Heart right ventricle (tissue), 16 donors: ENCODE measurements at regions of chr13 and their contacts with region 1.

Region 1: DNA sequence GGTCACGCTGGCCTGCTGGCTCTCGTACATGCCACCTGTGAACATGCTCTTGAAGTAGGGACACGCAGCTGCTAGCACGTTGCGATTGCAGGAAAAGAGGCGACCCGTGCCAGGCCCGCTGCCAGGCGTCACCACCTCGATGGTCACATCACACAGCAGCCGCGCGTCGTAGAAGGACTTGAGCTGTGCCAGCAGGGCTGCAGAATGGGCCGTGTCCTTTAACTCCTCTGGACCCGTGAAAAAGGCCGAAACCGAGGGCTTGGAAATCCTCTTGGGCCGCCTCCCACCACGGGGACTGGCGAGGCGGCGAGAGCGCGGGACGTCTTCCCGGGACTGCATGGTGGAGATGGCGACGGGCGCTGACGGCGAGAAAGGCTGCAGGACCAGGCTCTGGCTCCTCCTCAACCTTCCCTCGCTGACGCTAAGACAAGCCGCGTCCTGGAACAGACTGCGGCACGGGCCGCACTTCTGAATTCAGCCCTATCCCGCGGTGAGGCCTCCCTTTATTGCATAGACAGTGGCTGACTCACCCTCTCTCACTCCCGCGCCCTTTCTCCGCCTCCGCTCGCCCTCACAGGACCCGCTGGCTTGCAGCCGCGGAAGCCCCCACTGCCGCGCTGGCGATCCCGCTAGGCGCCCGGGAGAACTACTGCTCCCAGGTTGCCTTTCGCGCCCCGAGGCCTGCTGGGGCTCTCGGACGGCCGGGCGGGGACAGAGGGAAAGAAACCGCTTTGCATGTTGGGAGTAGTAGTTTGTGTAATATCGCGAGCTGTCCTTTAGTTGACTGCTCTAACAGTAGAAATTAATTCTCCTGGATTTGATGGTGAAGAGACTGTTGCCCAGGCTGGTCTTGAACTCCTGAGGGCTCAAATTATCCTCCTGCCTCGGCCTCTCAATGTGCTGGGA is at the start of gene KBTBD7:
- DNase-seq: peak; percentile 94
- ATAC-seq: peak; percentile 99 to 100 (median 99)
- H3K4me3 ChIP-seq: peak within 1 kb of the TSS; percentile 39 to 84 (median 68)
- H3K27ac ChIP-seq: peak within 1 kb of the TSS; percentile 18 to 94 (median 88)
- H3K4me1 ChIP-seq: peaks cover 2 to 29% (median 19%) of the 10 kb centered on the region in 9 donors
- H3K27me3 ChIP-seq: no peaks in the 10 kb centered on the region
- CTCF ChIP-seq: peak in 1 of 9 donors; percentile 10
- total RNA-seq, gene KBTBD7: 4.1 to 7.6 (median 5.6) TPM

Region 2: DNA sequence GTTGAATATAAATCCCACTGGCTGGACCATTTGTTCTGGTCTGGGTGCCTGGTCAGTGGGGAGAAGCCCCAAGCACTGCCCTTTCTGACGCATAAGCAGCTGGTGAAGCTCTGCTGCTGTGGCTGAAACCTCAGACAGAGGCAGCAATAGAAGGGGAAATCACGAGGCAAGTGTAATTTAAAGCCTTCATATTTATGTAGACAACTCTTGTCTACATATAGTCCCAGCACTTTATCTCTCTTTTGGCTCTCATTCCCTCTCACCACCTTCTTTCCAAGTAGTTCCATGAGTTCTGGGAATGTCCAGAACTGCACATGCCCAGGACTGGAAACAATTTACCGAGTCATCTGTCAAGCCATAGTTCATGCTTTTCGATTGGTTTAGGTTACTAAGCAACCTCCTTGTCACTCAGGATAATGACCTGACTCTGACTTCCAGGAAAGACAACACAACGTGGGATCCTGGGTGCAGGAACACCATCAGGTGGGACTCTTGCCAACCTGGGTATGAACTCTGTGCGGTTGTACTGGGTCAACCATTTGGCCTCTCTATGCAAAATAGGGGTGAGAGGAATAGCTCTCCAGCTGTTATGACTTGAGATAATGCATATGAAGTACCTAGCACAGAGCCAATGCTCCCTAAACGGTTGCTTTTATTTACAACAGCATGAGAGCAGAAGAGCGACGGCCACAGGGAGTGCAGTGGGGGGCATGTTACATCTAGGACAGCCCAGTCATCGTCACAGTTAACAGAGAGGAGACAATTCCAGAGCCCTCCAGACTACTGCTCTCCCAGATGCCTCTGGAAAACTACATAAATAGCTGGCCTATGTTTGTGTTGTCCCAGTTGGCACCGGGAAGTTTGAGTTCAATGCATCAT is 849.7 kb before region 1 on chr13:
- intact Hi-C with region 1: no loop called
- DNase-seq: no peak
- ATAC-seq: peak in 7 of 8 donors; percentile 18 to 87 (median 60)
- H3K4me3 ChIP-seq: no peak overlapping the region
- H3K27ac ChIP-seq: peak overlapping the region in 3 of 10 donors; percentile 12 to 65 (median 48)
- H3K4me1 ChIP-seq: peaks cover 0 to 31% (median 22%) of the 10 kb centered on the region in 9 donors
- H3K27me3 ChIP-seq: no peaks in the 10 kb centered on the region
- CTCF ChIP-seq: no peak

Region 3: GRCh38 chr13:41075034-41075433 is 119.1 kb before region 1 on chr13:
- intact Hi-C with region 1: loop called in 1 of 10 experiments (anchors 10 kb)
- DNase-seq: no peak
- ATAC-seq: no peak
- H3K4me3 ChIP-seq: no peak overlapping the region
- H3K27ac ChIP-seq: no peak overlapping the region
- H3K4me1 ChIP-seq: no peaks in the 10 kb centered on the region
- H3K27me3 ChIP-seq: no peaks in the 10 kb centered on the region
- CTCF ChIP-seq: peak; percentile 17 to 71 (median 58)

Region 4: DNA sequence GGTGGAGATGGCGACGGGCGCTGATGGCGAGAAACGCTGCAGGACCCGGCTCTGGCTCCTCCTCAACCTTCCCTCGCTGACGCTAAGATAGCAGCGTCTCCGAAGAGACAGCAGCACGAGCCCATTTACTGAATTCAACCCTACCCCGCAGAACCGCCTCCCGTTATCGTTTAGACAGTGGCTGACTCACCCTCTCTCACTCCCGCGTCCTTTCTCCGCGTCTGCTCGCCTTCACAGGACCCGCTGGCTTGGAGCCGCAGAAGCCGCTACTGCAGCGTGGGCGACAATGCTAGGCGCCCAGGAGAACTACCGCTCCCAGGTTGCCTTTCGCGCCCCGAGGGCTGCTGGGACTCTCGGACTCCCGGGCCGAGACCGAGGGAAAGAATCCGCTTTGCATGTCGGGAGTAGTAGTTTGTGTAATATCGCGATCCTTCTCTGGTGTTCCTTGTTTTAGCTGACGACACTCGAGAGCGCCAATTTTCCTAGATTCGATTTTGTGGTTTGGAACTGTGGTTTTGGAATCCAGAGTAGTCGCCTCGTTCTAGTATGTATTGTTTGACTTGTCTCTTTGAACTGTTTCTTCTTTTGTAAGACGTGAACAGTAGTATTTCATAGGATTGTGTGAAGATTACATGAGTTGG is 61.5 kb before region 1 on chr13 and contains the start of gene KBTBD6:
- intact Hi-C with region 1: loop called (anchors 1 to 10 kb)
- DNase-seq: peak; percentile 93 to 96
- ATAC-seq: peak; percentile 99
- H3K4me3 ChIP-seq: peak within 1 kb of the TSS; percentile 46 to 88 (median 74)
- H3K27ac ChIP-seq: peak within 1 kb of the TSS in 9 of 10 donors; percentile 72 to 90 (median 85)
- H3K4me1 ChIP-seq: peaks cover 0 to 54% (median 48%) of the 10 kb centered on the region in 9 donors
- H3K27me3 ChIP-seq: no peaks in the 10 kb centered on the region
- CTCF ChIP-seq: no peak
- total RNA-seq, gene KBTBD6: 5.4 to 10.6 (median 6.9) TPM

Region 5: DNA sequence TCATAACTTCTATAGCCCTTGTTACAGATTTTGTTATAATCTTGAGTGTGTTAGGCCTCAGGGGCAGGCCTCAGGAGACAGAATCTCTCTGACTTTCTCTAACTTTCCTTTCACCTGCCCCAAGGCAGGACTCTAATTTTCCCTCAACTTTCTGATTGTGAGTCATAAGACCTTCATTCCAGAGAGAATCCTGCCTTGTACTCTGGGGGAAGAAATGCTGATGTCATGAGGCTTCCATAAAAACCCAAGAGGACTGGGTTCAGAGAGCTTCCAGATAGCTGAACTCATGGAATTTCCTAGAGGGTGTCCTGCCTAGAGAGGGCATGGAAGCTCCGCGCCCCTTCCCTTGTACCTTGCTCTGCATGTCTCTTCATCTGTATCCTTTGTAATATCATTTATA is 56.2 kb before region 1 on chr13:
- intact Hi-C with region 1: loop called in 6 of 10 experiments (anchors 2 to 10 kb)
- DNase-seq: no peak
- ATAC-seq: no peak
- H3K4me3 ChIP-seq: no peak overlapping the region
- H3K27ac ChIP-seq: no peak overlapping the region
- H3K4me1 ChIP-seq: peaks cover 0 to 9% (median 8%) of the 10 kb centered on the region in 9 donors
- H3K27me3 ChIP-seq: no peaks in the 10 kb centered on the region
- CTCF ChIP-seq: no peak